ENCODE measurements at regions of chr17 and their contacts with region 1.

Region 1: GRCh38 chr17:66625311-66625775 is 209.6 kb upstream of the CACNG5 start:
- DNase-seq: peak; percentile 73
- ATAC-seq: peak; percentile 96
- H3K4me3 ChIP-seq: no peak overlapping the region
- H3K27ac ChIP-seq: no peak overlapping the region
- H3K4me1 ChIP-seq: no peaks in the 10 kb centered on the region
- H3K27me3 ChIP-seq: no peaks in the 10 kb centered on the region
- CTCF ChIP-seq: peak; percentile 94

Region 2: DNA sequence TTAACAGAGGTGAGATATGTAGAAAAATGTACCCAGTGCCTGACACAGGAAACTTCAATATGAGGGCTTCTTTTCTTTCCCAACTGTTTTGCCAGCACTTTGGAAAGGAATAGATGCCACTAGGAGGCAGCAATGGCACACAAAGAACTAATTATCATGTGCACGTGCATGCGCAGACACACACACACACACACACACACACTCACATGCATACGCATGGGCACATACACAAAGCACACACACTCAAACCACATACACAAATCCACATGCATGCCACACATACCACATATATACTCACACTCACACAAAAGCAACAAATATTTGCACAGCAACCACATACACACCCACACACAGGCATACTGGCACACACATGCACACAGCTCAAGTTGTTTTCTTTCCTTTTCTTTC is 424.7 kb before region 1 on chr17:
- CTCF ChIA-PET with region 1: interaction called, 4 read pairs
- POLR2A ChIA-PET with region 1: no interaction called
- intact Hi-C with region 1: loop called (anchors 1 kb)
- DNase-seq: peak; percentile 82
- ATAC-seq: peak; percentile 65
- H3K4me3 ChIP-seq: peak overlapping the region; percentile 4; the same call in 1 of the 2 replicates
- H3K27ac ChIP-seq: no peak overlapping the region
- H3K4me1 ChIP-seq: peaks cover 8% of the 10 kb centered on the region
- H3K27me3 ChIP-seq: no peaks in the 10 kb centered on the region
- CTCF ChIP-seq: peak; percentile 95

Region 3: GRCh38 chr17:66301797-66302741 is 323.3 kb before region 1 on chr17 and contains the start of gene PRKCA:
- CTCF ChIA-PET with region 1: no interaction called
- POLR2A ChIA-PET with region 1: no interaction called
- intact Hi-C with region 1: loop called (anchors 5 kb)
- DNase-seq: peak; percentile 87
- ATAC-seq: peak; percentile 78
- H3K4me3 ChIP-seq: peak within 1 kb of the TSS; percentile 94
- H3K27ac ChIP-seq: peak within 1 kb of the TSS; percentile 30
- H3K4me1 ChIP-seq: peaks cover 37% of the 10 kb centered on the region
- H3K27me3 ChIP-seq: no peaks in the 10 kb centered on the region
- CTCF ChIP-seq: no peak
- total RNA-seq, gene PRKCA: 22.6 and 28.2 TPM in 2 replicates

Region 4: DNA sequence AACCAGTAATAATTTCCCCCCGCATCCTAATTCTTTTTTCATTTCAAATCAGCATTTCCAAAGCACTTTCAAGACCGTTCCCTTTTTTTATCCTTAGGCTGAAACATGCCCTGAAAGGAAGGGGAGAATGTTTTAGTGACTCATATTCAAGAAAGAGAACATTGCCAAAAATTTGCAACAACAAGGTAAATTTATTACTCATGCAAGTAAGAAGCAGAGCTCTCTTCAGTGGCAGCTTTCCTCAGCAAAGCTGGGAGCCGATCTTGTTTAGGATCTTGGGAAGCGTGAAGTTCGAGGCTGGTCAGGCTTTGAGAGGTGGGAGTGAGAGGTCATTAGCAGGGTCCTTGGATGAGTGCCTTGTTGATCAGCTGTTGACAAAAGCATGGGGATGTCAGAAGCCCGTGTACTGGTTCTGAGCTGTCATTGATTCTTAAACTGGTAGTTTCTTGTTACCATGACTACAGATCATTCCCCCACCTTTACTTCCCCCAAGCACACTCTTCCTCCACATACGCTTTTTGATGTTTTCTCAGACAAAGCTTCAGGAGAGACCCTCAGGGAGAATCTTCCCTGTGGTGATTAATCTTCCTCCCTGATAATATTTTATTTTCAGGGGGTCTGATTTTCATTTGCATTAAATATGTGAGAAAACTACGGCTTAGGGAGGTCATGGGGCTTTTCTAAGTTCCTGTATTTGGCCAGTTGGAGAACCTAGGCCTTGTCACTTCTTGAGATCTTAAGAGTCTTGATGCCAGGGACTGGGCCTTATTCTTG is 193.2 kb before region 1 on chr17:
- CTCF ChIA-PET with region 1: no interaction called
- POLR2A ChIA-PET with region 1: no interaction called
- intact Hi-C with region 1: loop called (anchors 2 kb)
- DNase-seq: peak; percentile 93
- ATAC-seq: peak; percentile 94
- H3K4me3 ChIP-seq: peak overlapping the region; percentile 20; the same call in 1 of the 2 replicates
- H3K27ac ChIP-seq: peak overlapping the region; percentile 31
- H3K4me1 ChIP-seq: peaks cover 27% of the 10 kb centered on the region
- H3K27me3 ChIP-seq: no peaks in the 10 kb centered on the region
- CTCF ChIP-seq: no peak

Region 5: GRCh38 chr17:66523378-66524200 is 101.8 kb before region 1 on chr17:
- CTCF ChIA-PET with region 1: interaction called, 3 read pairs
- POLR2A ChIA-PET with region 1: no interaction called
- intact Hi-C with region 1: loop called (anchors 1 kb)
- DNase-seq: no peak
- ATAC-seq: peak; percentile 84
- H3K4me3 ChIP-seq: no peak overlapping the region
- H3K27ac ChIP-seq: peak overlapping the region; percentile 84
- H3K4me1 ChIP-seq: peaks cover 38% of the 10 kb centered on the region
- H3K27me3 ChIP-seq: no peaks in the 10 kb centered on the region
- CTCF ChIP-seq: peak; percentile 17; the same call in 1 of the 2 replicates

Region 6: GRCh38 chr17:68318103-68318991 is 1693.0 kb after region 1 on chr17:
- CTCF ChIA-PET with region 1: no interaction called
- POLR2A ChIA-PET with region 1: interaction called, 13 read pairs
- intact Hi-C with region 1: no loop called
- DNase-seq: peak; percentile 96
- ATAC-seq: peak; percentile 99
- H3K4me3 ChIP-seq: no peak overlapping the region
- H3K27ac ChIP-seq: peak overlapping the region; percentile 86
- H3K4me1 ChIP-seq: peaks cover 25% of the 10 kb centered on the region
- H3K27me3 ChIP-seq: no peaks in the 10 kb centered on the region
- CTCF ChIP-seq: no peak

Measured in PC-3 (cell line).